CD8-positive, alpha-beta T cell (primary cell): ENCODE measurements at regions of chr12 and their contacts with region 1.

Region 1: GRCh38 chr12:82054566-82054965 is 295.4 kb upstream of the PPFIA2 start:
- DNase-seq: no peak
- ATAC-seq: no peak
- H3K4me3 ChIP-seq: no peak overlapping the region
- H3K4me3 Mint-ChIP-seq: no peak overlapping the region
- H3K27ac ChIP-seq: no peak overlapping the region
- H3K27ac Mint-ChIP-seq: no peak overlapping the region
- H3K4me1 ChIP-seq: no peaks in the 10 kb centered on the region
- H3K4me1 Mint-ChIP-seq: no peaks in the 10 kb centered on the region
- H3K27me3 ChIP-seq: no peaks in the 10 kb centered on the region
- H3K27me3 Mint-ChIP-seq: no peaks in the 10 kb centered on the region
- CTCF ChIP-seq: no peak

Region 2: GRCh38 chr12:82040987-82041743 is 13.4 kb before region 1 on chr12:
- CTCF ChIA-PET with region 1: no interaction called
- POLR2A ChIA-PET with region 1: no interaction called
- intact Hi-C with region 1: no loop called
- DNase-seq: no peak
- ATAC-seq: no peak
- H3K4me3 ChIP-seq: no peak overlapping the region
- H3K4me3 Mint-ChIP-seq: no peak overlapping the region
- H3K27ac ChIP-seq: no peak overlapping the region
- H3K27ac Mint-ChIP-seq: no peak overlapping the region
- H3K4me1 ChIP-seq: no peaks in the 10 kb centered on the region
- H3K4me1 Mint-ChIP-seq: no peaks in the 10 kb centered on the region
- H3K27me3 ChIP-seq: no peaks in the 10 kb centered on the region
- H3K27me3 Mint-ChIP-seq: no peaks in the 10 kb centered on the region
- CTCF ChIP-seq: no peak

Region 3: GRCh38 chr12:82650619-82651337 is 596.2 kb after region 1 on chr12:
- CTCF ChIA-PET with region 1: no interaction called
- POLR2A ChIA-PET with region 1: no interaction called
- intact Hi-C with region 1: loop called in 1 of 2 experiments (anchors 5 kb)
- DNase-seq: peak in 3 of 9 experiments; percentile 16 to 24 (median 23)
- ATAC-seq: no peak
- H3K4me3 ChIP-seq: no peak overlapping the region
- H3K4me3 Mint-ChIP-seq: no peak overlapping the region
- H3K27ac ChIP-seq: no peak overlapping the region
- H3K27ac Mint-ChIP-seq: no peak overlapping the region
- H3K4me1 ChIP-seq: no peaks in the 10 kb centered on the region
- H3K4me1 Mint-ChIP-seq: no peaks in the 10 kb centered on the region
- H3K27me3 ChIP-seq: no peaks in the 10 kb centered on the region
- H3K27me3 Mint-ChIP-seq: no peaks in the 10 kb centered on the region
- CTCF ChIP-seq: no peak